GM23248 (cell line): ENCODE measurements at regions of chr2 and their contacts with region 1.

Region 1: GRCh38 chr2:33395655-33396249 is 80.7 kb upstream of the RASGRP3 start:
- DNase-seq: peak; percentile 64
- H3K4me3 ChIP-seq: no peak overlapping the region
- H3K27ac ChIP-seq: no peak overlapping the region
- H3K4me1 ChIP-seq: peaks cover 4% of the 10 kb centered on the region; the same call in 1 of the 2 replicates
- H3K27me3 ChIP-seq: no peaks in the 10 kb centered on the region

Region 2: DNA sequence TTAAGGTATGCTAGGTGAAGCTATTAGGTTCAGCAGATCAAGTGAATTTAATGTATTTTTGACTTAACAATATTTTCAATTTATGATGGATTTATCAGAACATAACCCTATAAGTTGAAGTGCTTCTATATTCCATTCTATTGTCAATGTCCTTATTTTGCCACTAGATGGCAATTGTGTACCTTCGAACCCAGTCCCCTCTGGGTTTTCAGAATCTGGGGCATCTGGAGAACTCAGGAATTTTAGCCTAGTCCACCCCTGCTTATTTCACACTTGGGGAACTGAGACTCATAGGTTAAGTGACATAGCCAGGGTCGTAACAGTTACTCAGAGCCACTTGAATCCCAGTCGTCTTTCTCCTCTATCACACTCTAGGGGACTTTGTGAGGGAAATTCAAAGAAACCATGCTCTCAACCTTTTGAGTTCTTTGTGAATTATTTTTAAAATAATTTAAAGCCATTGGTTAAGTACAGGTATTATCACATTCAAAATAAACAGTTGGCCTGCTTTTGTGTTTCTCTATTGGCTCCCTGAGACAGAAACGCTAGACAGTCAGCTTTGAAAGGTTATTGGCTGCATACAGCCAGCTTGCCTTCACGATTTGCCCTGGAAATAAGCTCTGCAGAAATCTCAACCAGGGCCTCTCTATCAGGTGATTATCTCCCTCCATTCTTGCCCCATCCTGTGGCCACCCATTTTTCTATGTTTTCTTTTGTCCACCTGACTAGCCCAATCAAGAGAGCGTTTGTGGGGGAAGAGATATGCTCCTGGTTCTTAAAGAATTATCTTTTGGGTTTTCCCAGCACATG is 622.9 kb before region 1 on chr2:
- in situ Hi-C with region 1: loop called (anchors 25 kb)
- DNase-seq: peak; percentile 72
- H3K4me3 ChIP-seq: no peak overlapping the region
- H3K27ac ChIP-seq: no peak overlapping the region
- H3K4me1 ChIP-seq: no peaks in the 10 kb centered on the region
- H3K27me3 ChIP-seq: no peaks in the 10 kb centered on the region

Region 3: GRCh38 chr2:32895424-32895823 is 500.3 kb before region 1 on chr2:
- in situ Hi-C with region 1: no loop called
- DNase-seq: peak; percentile 2
- H3K4me3 ChIP-seq: no peak overlapping the region
- H3K27ac ChIP-seq: no peak overlapping the region
- H3K4me1 ChIP-seq: no peaks in the 10 kb centered on the region
- H3K27me3 ChIP-seq: peaks cover 21% of the 10 kb centered on the region; the same call in 1 of the 2 replicates